ENCODE measurements at regions of chr7 and their contacts with region 1.

Region 1: DNA sequence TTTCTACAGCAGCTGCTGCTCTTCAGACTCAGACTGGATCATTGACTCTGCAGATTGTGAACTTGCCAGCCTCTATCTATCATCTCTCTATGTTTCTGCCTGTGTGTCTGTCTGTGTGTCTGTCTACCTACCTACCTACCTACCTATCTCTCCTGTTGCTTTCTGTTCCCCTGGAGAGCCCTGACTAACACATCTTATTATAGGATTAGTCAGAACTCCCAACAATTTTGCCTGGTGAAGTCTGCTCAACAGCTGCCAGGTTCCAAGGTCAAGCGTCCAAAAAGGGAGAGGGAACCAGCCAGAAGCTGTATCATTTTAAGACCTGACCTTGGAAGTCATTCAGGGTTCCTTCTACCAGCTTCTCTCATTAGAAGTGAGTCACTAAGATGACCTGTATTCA is 579.0 kb upstream of the DPP6 start:
- DNase-seq: peak in 1 of 2 donors; percentile 18
- ATAC-seq: peak in 4 of 8 donors; percentile 52 to 77 (median 56)
- H3K4me3 ChIP-seq: no peak overlapping the region
- H3K27ac ChIP-seq: peak overlapping the region in 4 of 10 donors; percentile 11 to 71 (median 38)
- H3K4me1 ChIP-seq: peaks cover 0 to 10% (median 0%) of the 10 kb centered on the region in 9 donors
- H3K27me3 ChIP-seq: peaks cover 0 to 3% (median 0%) of the 10 kb centered on the region in 7 donors
- CTCF ChIP-seq: no peak

Region 2: DNA sequence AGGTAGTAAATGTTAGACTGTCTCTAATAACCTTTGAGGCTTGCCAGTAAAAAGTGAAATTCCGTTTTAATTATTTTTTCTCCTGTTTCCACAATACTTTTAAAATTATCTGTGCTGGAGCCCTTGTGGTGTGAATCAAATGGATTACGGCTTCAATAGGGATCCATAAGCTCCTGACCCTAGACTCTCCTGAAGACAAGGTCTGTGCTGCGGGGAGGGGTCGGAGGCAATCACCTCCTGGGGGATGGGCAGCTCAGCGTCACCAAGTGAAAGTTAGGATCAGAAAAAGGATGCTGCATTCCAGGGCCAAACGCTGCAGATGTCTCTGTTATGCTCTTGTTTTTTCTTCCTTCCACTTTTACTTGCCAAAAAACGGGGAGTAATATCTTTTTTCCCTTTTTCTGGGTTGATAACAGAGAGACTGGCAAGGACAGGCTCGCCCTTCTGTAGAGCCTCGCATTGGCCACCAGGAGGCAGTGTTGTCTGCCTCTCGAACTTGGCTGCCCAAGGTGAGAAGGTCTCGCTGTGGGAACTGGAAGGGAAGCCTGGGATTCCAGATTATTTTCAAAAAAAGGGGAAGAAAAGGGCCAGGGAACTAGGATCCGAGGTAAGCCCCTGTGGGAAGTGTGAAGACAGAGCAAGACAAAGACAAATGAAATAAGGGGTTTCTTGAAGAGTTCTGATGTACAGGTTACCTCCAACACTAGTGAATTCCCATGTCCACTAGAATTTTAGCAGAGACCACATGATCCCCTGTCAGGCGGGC is 91.7 kb before region 1 on chr7:
- intact Hi-C with region 1: loop called in 1 of 10 experiments (anchors 10 kb)
- DNase-seq: peak in 1 of 2 donors; percentile 23
- ATAC-seq: peak in 5 of 8 donors; percentile 40 to 83 (median 69)
- H3K4me3 ChIP-seq: peak overlapping the region in 1 of 10 donors; percentile 33
- H3K27ac ChIP-seq: no peak overlapping the region
- H3K4me1 ChIP-seq: peaks cover 0 to 4% (median 0%) of the 10 kb centered on the region in 9 donors
- H3K27me3 ChIP-seq: peaks cover 0 to 10% (median 0%) of the 10 kb centered on the region in 7 donors
- CTCF ChIP-seq: peak; percentile 41 to 77 (median 70)

Region 3: DNA sequence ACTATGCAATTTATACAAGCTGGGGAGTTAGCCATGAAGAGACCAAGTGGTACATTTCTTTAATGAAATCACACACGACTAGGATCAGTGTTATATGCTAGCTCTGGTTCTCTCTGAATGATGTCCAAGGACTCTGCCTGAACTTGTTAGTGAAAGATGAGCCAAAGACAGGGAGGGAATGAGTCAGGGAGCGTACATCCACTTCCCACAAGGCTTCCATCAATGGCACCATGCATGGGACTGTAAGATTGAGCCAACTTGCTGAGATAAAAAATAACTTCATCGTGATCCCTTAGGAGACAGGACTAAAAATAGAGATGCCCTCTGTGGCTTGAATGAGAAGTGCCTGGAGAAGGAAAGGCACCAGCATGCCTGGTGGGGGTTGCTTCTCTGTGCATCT is 83.9 kb before region 1 on chr7:
- intact Hi-C with region 1: loop called in 2 of 10 experiments (anchors 1 to 10 kb)
- DNase-seq: no peak
- ATAC-seq: peak in 5 of 8 donors; percentile 71 to 93 (median 88)
- H3K4me3 ChIP-seq: no peak overlapping the region
- H3K27ac ChIP-seq: peak overlapping the region in 1 of 10 donors; percentile 40
- H3K4me1 ChIP-seq: no peaks in the 10 kb centered on the region
- H3K27me3 ChIP-seq: no peaks in the 10 kb centered on the region
- CTCF ChIP-seq: no peak

Region 4: DNA sequence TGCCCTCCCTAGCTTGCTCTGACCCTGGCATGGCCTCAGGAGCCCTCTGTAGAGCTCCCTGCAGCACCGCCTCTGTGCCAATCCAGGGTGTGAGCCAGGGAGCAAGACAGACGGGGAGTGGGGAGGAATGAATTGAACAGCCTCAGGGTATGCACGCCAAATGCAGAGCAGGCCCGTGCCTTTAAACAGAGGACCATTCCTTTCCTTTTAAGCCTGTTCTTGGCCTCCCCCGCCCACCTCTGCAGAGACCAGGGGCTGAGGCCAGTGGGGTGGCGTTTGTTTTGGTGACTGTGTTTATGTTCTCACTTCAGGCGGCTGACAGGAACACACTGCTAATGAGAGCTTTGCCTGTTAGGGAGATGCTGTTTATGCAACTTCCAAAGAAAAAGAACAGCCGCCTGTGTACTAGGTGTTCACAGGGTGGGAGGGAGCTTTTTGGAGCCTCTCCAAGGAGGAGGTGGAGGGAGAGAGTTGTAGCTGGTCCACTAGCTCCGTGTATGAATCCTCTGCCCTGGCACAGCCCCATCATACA is 51.0 kb after region 1 on chr7:
- intact Hi-C with region 1: loop called in 4 of 10 experiments (anchors 1 to 10 kb)
- DNase-seq: peak; percentile 4 to 60
- ATAC-seq: peak; percentile 37 to 94 (median 75)
- H3K4me3 ChIP-seq: no peak overlapping the region
- H3K27ac ChIP-seq: peak overlapping the region in 4 of 10 donors; percentile 33 to 72 (median 52)
- H3K4me1 ChIP-seq: peaks cover 0 to 14% (median 4%) of the 10 kb centered on the region in 9 donors
- H3K27me3 ChIP-seq: no peaks in the 10 kb centered on the region
- CTCF ChIP-seq: no peak

Region 5: GRCh38 chr7:153835104-153835503 is 361.9 kb after region 1 on chr7:
- intact Hi-C with region 1: no loop called
- DNase-seq: no peak
- ATAC-seq: no peak
- H3K4me3 ChIP-seq: no peak overlapping the region
- H3K27ac ChIP-seq: no peak overlapping the region
- H3K4me1 ChIP-seq: no peaks in the 10 kb centered on the region
- H3K27me3 ChIP-seq: no peaks in the 10 kb centered on the region
- CTCF ChIP-seq: peak in 1 of 9 donors; percentile 31